ENCODE measurements at regions of chr3 and their contacts with region 1.

Region 1: GRCh38 chr3:184229394-184230080 is at the start of gene VWA5B2:
- H3K4me3 ChIP-seq: peak within 1 kb of the TSS; percentile 70
- H3K27ac ChIP-seq: no peak within 1 kb of the TSS
- H3K4me1 ChIP-seq: no peaks in the 10 kb centered on the region
- CTCF ChIP-seq: no peak

Region 2: DNA sequence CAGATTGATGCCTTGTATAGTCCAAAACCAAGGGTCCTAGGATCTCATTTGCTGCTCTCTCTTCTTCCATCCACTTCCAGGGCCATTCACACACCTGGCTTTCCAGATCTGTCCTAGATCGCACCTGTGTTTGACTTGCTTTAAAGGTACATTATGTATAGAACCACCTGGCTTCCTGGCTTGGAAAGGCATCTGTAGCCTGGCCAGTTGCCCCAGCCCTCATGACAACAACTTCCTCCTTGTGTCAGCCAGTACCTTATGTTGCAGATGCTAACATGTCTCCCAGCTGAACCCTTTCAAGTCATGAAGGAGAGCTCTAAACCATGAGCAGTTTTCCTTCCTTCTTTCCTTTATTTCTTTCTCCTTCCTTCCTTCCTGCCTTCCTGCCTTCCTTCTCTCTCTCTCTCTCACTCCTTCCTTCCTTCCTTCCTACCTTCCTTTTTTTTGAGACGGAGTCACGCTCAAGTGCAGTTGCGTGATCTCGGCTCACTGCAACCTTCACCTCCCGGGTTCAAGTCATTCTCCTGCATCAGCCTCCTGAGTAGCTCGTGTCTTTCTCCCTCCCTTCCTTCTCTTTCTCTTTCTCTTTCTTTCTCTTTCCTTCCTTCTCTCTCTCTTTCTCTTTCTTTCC is 179.2 kb before region 1 on chr3:
- CTCF ChIA-PET with region 1: no interaction called
- POLR2A ChIA-PET with region 1: no interaction called
- H3K4me3 ChIP-seq: no peak overlapping the region
- H3K27ac ChIP-seq: no peak overlapping the region
- H3K4me1 ChIP-seq: no peaks in the 10 kb centered on the region
- CTCF ChIP-seq: no peak

Region 3: GRCh38 chr3:184209146-184209923 is 20.2 kb before region 1 on chr3:
- CTCF ChIA-PET with region 1: interaction called, 16 read pairs
- POLR2A ChIA-PET with region 1: no interaction called
- H3K4me3 ChIP-seq: no peak overlapping the region
- H3K27ac ChIP-seq: no peak overlapping the region
- H3K4me1 ChIP-seq: no peaks in the 10 kb centered on the region
- CTCF ChIP-seq: no peak

Region 4: DNA sequence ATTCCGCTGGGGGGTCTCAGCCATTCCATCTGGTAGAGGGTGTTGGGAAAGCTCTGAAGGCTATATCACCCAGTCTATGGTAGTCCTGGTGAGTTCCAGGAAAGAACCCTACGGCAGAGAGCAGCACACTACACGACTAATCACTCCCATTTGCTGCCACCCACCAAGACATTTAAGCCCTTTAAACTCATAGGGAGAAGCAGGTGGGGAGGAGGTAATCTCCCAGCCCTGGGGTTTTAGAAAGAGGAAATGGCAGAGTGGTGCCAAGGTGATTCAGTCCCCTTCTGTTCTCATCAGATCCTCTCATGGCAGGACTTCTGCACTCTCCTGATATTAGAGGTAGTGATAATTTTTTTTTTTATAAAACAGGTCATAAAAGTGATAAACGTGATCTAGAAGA is 10.7 kb before region 1 on chr3:
- CTCF ChIA-PET with region 1: interaction called, 25 read pairs
- POLR2A ChIA-PET with region 1: no interaction called
- H3K4me3 ChIP-seq: no peak overlapping the region
- H3K27ac ChIP-seq: no peak overlapping the region
- H3K4me1 ChIP-seq: no peaks in the 10 kb centered on the region
- CTCF ChIP-seq: no peak

Region 5: DNA sequence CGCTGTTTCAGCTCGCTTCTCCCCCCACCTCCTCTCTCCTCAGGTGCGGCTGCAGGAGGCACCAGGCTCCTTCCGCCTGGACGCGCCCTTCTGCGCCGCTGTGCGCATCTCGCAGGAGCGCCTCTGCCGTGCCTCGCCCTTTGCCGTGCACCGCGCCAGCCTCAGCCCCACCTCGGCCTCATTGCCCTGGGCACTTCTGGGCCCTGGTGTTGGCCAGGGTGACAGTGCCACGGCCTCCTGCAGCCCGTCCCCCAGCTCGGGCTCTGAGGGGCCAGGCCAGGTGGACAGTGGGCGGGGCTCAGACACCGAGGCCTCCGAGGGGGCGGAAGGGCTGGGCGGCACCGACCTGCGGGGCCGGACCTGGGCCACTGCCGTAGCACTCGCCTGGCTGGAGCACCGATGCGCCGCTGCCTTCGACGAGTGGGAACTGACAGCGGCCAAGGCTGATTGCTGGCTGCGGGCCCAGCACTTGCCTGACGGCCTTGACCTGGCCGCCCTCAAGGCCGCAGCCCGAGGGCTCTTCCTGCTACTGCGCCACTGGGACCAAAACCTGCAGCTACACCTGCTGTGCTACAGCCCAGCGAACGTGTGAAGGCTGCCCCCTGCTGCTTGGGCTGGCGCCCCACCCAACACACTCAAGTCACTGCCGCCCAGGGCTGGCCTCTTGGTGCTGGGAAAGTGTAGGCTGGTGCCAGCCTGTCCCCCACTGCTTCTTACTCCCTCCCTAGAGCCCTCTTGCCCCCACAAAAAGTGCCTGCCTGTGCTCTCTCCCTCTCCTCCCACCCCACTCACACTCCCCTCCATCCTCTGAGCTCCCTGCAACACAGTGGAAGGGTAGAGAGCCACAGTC is 12.1 kb after region 1 on chr3:
- CTCF ChIA-PET with region 1: interaction called, 66 read pairs
- POLR2A ChIA-PET with region 1: no interaction called
- H3K4me3 ChIP-seq: no peak overlapping the region
- H3K27ac ChIP-seq: no peak overlapping the region
- H3K4me1 ChIP-seq: no peaks in the 10 kb centered on the region
- CTCF ChIP-seq: peak; percentile 64